CD8-positive, alpha-beta T cell (primary cell): ENCODE measurements at regions of chr13 and their contacts with region 1.

Region 1: DNA sequence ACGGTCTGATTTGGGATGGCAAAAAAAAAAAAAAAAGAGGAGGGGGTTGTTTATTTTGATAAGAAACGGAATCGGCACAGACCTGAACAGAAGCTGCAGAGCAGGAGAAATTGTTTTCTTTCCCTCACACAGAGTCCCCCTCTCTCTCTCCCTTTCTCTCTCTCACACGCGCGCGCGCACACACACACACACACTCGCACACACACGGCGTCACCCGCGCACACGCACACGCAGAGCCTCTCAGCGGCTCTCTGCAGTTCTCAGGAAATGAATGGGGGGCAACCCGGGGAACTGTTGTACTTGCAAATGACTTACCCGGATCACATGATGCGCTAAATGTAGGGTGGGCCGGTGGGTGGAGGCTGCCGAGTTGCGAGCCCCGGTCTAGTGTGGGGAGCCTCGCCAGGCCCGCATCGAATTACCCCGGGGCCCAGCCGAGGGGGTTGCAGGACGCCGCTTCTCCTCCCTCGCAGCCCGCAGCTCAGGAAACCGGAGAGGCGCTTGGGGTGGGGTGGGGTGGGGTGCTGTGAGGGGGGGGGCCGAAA is 475 bp downstream of the KLF12 start:
- DNase-seq: peak; percentile 81 to 98 (median 91)
- ATAC-seq: peak; percentile 62
- H3K4me3 ChIP-seq: peak overlapping the region; percentile 80 to 95
- H3K4me3 Mint-ChIP-seq: peak overlapping the region; percentile 95
- H3K27ac ChIP-seq: peak overlapping the region; percentile 82 to 98
- H3K27ac Mint-ChIP-seq: peak overlapping the region; percentile 99
- H3K4me1 ChIP-seq: peaks cover 32% of the 10 kb centered on the region
- H3K4me1 Mint-ChIP-seq: peaks cover 34% of the 10 kb centered on the region
- H3K27me3 ChIP-seq: no peaks in the 10 kb centered on the region
- H3K27me3 Mint-ChIP-seq: no peaks in the 10 kb centered on the region
- CTCF ChIP-seq: no peak

Region 2: DNA sequence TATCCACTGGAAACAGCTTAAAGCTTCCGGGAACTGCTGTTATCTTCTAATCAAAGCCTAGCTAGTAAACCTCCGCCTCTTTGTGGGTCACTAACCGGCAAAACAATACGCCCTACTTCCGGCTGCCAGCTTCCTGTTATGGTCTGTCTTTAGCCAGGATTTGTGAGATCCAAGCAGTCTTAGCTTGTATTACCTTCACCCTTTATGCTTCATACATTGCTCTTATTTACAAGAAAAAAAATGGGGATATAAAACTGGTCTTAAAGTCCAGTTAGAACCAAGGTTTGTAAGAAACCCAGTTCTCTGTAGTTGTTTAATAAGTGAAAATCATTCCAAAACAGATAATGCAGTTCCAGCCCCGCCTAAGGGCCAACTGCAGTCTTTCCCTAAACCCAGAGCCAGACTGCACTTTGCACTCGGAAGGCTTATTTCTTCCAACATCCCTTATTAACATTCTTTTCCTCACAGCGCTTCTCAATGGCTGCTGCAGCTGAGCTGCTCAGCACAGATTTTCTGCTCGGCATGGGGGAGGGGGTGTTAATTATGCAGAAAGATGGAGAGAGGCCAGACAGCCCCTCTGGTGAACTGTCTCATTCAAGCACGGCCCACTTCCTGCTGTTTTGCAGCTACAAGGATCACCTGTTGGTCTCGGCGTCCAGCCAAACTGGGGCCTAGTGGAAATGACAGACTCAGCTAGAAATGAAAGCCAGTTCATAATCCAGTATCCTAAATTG is 367.9 kb before region 1 on chr13:
- CTCF ChIA-PET with region 1: no interaction called
- POLR2A ChIA-PET with region 1: interaction called, 10 read pairs
- intact Hi-C with region 1: loop called (anchors 1 to 5 kb)
- DNase-seq: peak; percentile 65 to 94 (median 86)
- ATAC-seq: peak; percentile 89
- H3K4me3 ChIP-seq: peak overlapping the region; percentile 28 to 56
- H3K4me3 Mint-ChIP-seq: peak overlapping the region; percentile 81
- H3K27ac ChIP-seq: peak overlapping the region; percentile 73 to 86
- H3K27ac Mint-ChIP-seq: peak overlapping the region; percentile 98
- H3K4me1 ChIP-seq: peaks cover 77% of the 10 kb centered on the region
- H3K4me1 Mint-ChIP-seq: peaks cover 85% of the 10 kb centered on the region
- H3K27me3 ChIP-seq: no peaks in the 10 kb centered on the region
- H3K27me3 Mint-ChIP-seq: no peaks in the 10 kb centered on the region
- CTCF ChIP-seq: no peak

Region 3: GRCh38 chr13:73984949-73985691 is 148.6 kb before region 1 on chr13:
- CTCF ChIA-PET with region 1: interaction called, 5 read pairs
- POLR2A ChIA-PET with region 1: interaction called, 12 read pairs
- intact Hi-C with region 1: loop called (anchors 2 kb)
- DNase-seq: peak; percentile 51 to 93 (median 79)
- ATAC-seq: peak; percentile 90
- H3K4me3 ChIP-seq: peak overlapping the region in 1 of 2 experiments; percentile 8
- H3K4me3 Mint-ChIP-seq: peak overlapping the region; percentile 71
- H3K27ac ChIP-seq: peak overlapping the region; percentile 33 to 40
- H3K27ac Mint-ChIP-seq: no peak overlapping the region
- H3K4me1 ChIP-seq: peaks cover 53% of the 10 kb centered on the region
- H3K4me1 Mint-ChIP-seq: peaks cover 43% of the 10 kb centered on the region
- H3K27me3 ChIP-seq: no peaks in the 10 kb centered on the region
- H3K27me3 Mint-ChIP-seq: no peaks in the 10 kb centered on the region
- CTCF ChIP-seq: no peak

Region 4: DNA sequence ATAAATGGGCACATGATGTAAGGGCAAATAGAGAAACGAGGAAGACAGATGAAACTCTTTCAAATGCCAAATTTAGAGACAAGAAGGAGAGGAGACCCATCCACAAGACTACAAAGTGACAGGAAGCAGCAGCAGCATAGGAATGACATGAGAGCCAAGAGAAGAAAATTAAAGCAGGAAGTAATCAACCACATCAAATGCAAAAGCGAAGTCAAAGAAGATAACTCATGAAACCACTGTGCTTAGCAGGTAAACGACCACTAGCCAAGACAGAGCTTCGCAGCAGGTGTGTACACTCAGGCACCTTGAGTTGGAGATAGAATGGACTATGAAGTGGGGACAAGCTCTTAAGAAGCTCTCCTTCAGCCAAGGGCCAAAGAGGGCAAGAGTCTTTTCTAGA is 63.7 kb before region 1 on chr13:
- CTCF ChIA-PET with region 1: interaction called, 3 read pairs
- POLR2A ChIA-PET with region 1: interaction called, 6 read pairs
- intact Hi-C with region 1: loop called in 1 of 2 experiments (anchors 2 kb)
- DNase-seq: peak in 6 of 9 experiments; percentile 7 to 79 (median 47)
- ATAC-seq: peak; percentile 75
- H3K4me3 ChIP-seq: peak overlapping the region; percentile 7 to 14
- H3K4me3 Mint-ChIP-seq: peak overlapping the region; percentile 70
- H3K27ac ChIP-seq: peak overlapping the region in 1 of 2 experiments; percentile 69
- H3K27ac Mint-ChIP-seq: peak overlapping the region; percentile 89
- H3K4me1 ChIP-seq: peaks cover 50% of the 10 kb centered on the region
- H3K4me1 Mint-ChIP-seq: peaks cover 78% of the 10 kb centered on the region
- H3K27me3 ChIP-seq: no peaks in the 10 kb centered on the region
- H3K27me3 Mint-ChIP-seq: no peaks in the 10 kb centered on the region
- CTCF ChIP-seq: no peak

Region 5: GRCh38 chr13:74191410-74191809 is 57.7 kb after region 1 on chr13:
- CTCF ChIA-PET with region 1: no interaction called
- POLR2A ChIA-PET with region 1: interaction called, 3 read pairs
- intact Hi-C with region 1: loop called in 1 of 2 experiments (anchors 5 kb)
- DNase-seq: no peak
- ATAC-seq: no peak
- H3K4me3 ChIP-seq: no peak overlapping the region
- H3K4me3 Mint-ChIP-seq: no peak overlapping the region
- H3K27ac ChIP-seq: no peak overlapping the region
- H3K27ac Mint-ChIP-seq: no peak overlapping the region
- H3K4me1 ChIP-seq: peaks cover 9% of the 10 kb centered on the region
- H3K4me1 Mint-ChIP-seq: peaks cover 30% of the 10 kb centered on the region
- H3K27me3 ChIP-seq: no peaks in the 10 kb centered on the region
- H3K27me3 Mint-ChIP-seq: no peaks in the 10 kb centered on the region
- CTCF ChIP-seq: no peak

Region 6: GRCh38 chr13:75326173-75327134 is 1192.7 kb after region 1 on chr13:
- CTCF ChIA-PET with region 1: no interaction called
- POLR2A ChIA-PET with region 1: interaction called, 4 read pairs
- intact Hi-C with region 1: loop called in 1 of 2 experiments (anchors 10 kb)
- DNase-seq: peak in 8 of 9 experiments; percentile 21 to 88 (median 46)
- ATAC-seq: peak; percentile 90
- H3K4me3 ChIP-seq: peak overlapping the region; percentile 55 to 65
- H3K4me3 Mint-ChIP-seq: peak overlapping the region; percentile 90
- H3K27ac ChIP-seq: peak overlapping the region; percentile 85 to 93
- H3K27ac Mint-ChIP-seq: peak overlapping the region; percentile 98
- H3K4me1 ChIP-seq: peaks cover 28% of the 10 kb centered on the region
- H3K4me1 Mint-ChIP-seq: peaks cover 48% of the 10 kb centered on the region
- H3K27me3 ChIP-seq: no peaks in the 10 kb centered on the region
- H3K27me3 Mint-ChIP-seq: no peaks in the 10 kb centered on the region
- CTCF ChIP-seq: no peak